Common myeloid progenitor, CD34-positive (primary cell): ENCODE measurements at regions of chr1 and their contacts with region 1.

Region 1: DNA sequence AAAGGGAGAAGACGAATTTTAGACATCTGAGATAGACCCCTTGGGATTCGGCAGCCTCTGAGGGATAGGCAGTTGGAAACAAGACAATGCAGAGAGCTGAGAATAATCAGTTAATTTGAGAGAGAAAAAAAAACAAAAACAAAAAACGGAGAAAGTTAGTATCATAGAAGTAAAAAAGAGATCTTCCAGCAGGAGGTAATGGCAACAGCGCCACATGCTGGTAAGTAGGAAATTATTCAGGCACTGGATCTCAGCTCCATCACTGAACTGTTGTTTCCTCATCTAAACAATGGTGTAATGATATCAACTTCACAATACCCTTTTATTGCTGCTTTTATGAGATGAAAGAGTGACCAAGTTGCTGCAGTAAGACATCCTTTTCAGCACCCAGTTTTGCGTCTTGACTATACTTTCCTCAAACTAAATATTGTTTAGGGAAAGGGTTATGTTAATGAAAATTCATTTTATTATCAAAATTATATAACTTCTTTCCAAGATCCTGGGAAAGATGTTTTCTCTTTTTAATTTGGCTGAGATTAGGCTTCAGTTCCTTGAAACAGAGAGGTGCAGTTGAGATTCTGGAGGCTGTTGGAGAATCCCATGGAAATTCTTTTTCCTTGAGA is 91.4 kb upstream of the KCNA3 start:
- DNase-seq: peak; percentile 69 to 87 (median 84)
- H3K4me3 ChIP-seq: no peak overlapping the region
- H3K27ac ChIP-seq: no peak overlapping the region
- H3K4me1 ChIP-seq: peaks cover 0 to 2% (median 0%) of the 10 kb centered on the region in 4 experiments
- H3K27me3 ChIP-seq: peaks cover 0 to 18% (median 6%) of the 10 kb centered on the region in 5 experiments

Region 2: GRCh38 chr1:110630839-110631663 is 135.1 kb before region 1 on chr1:
- CTCF ChIA-PET with region 1: interaction called, 69 read pairs
- POLR2A ChIA-PET with region 1: no interaction called
- DNase-seq: peak; percentile 69 to 82 (median 80)
- H3K4me3 ChIP-seq: peak overlapping the region in 1 of 7 experiments; percentile 19
- H3K27ac ChIP-seq: no peak overlapping the region
- H3K4me1 ChIP-seq: peaks cover 0 to 18% (median 12%) of the 10 kb centered on the region in 4 experiments
- H3K27me3 ChIP-seq: no peaks in the 10 kb centered on the region

Region 3: DNA sequence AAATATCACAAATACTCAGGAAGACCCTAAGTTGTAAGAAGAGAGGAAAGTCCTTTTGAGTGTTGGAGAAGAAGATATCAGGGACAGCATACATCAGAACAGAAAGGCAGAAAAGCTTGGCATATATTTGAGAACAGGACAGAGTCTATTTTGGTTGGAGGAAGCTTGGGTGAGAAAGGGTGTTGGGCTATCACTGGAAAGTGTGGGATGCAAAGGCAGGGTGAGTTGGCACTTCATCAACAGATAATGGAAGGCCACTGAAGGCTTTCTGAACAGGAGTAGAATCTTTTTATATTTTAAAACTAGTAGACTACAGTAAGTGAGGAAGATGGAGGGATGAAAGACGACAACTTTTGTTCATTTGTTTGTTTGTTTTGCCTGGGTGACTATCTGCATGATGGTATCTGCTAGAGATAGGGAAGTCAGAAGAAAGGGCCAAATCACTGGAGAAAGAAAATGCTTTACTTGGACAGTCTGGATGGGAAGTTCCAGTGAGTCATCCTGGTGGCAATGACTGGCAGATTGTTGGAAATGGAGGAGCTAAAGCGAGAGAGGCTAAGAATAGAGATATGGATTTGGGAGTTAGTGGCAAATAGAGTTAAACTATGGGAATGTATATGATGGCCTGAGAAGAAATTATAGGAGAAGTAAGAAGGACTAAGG is 126.3 kb before region 1 on chr1:
- CTCF ChIA-PET with region 1: interaction called, 69 read pairs
- POLR2A ChIA-PET with region 1: no interaction called
- DNase-seq: peak in 2 of 3 donors; percentile 57 to 77
- H3K4me3 ChIP-seq: no peak overlapping the region
- H3K27ac ChIP-seq: no peak overlapping the region
- H3K4me1 ChIP-seq: peaks cover 3 to 17% (median 16%) of the 10 kb centered on the region in 4 experiments
- H3K27me3 ChIP-seq: peaks cover 0 to 10% (median 0%) of the 10 kb centered on the region in 5 experiments

Region 4: GRCh38 chr1:110840718-110841117 is 74.6 kb after region 1 on chr1:
- CTCF ChIA-PET with region 1: no interaction called
- POLR2A ChIA-PET with region 1: no interaction called
- DNase-seq: no peak
- H3K4me3 ChIP-seq: no peak overlapping the region
- H3K27ac ChIP-seq: no peak overlapping the region
- H3K4me1 ChIP-seq: no peaks in the 10 kb centered on the region
- H3K27me3 ChIP-seq: no peaks in the 10 kb centered on the region